Thyroid gland (tissue), 4 donors: ENCODE measurements at regions of chr2 and their contacts with region 1.

Region 1: DNA sequence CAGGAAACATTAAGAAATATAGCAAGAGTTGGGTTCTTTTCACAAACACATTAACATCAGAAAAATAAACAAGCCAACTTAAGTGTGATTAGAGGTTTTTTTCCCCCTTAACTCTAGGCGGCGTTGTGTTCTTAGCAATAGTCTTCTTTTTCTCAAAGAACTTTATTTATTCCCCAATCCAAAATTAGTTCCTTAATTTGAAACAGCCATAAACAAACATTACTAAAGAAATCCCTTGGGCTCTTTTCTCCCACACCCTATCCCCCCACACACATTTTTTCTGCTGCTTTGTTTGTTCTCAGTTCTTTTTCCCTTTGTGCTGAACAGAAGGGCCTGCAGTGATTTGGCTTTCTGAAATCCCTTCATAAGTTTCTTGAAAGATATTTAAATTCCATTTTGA is 13.2 kb upstream of the MYO1B start:
- DNase-seq: no peak
- H3K4me3 ChIP-seq: no peak overlapping the region
- H3K27ac ChIP-seq: no peak overlapping the region
- H3K4me1 ChIP-seq: no peaks in the 10 kb centered on the region
- H3K27me3 ChIP-seq: no peaks in the 10 kb centered on the region
- CTCF ChIP-seq: peak in 3 of 6 experiments; percentile 39 to 45 (median 41)
- POLR2A ChIP-seq: no peak

Region 2: GRCh38 chr2:191501561-191502168 is 269.7 kb after region 1 on chr2:
- intact Hi-C with region 1: loop called (anchors 10 kb)
- DNase-seq: no peak
- H3K4me3 ChIP-seq: no peak overlapping the region
- H3K27ac ChIP-seq: peak overlapping the region in 2 of 3 donors; percentile 27 to 33
- H3K4me1 ChIP-seq: peaks cover 0 to 6% of the 10 kb centered on the region in 2 donors
- H3K27me3 ChIP-seq: no peaks in the 10 kb centered on the region
- CTCF ChIP-seq: peak in 4 of 6 experiments; percentile 22 to 72 (median 60)
- POLR2A ChIP-seq: no peak